ENCODE measurements at regions of chr2 and their contacts with region 1.

Region 1: DNA sequence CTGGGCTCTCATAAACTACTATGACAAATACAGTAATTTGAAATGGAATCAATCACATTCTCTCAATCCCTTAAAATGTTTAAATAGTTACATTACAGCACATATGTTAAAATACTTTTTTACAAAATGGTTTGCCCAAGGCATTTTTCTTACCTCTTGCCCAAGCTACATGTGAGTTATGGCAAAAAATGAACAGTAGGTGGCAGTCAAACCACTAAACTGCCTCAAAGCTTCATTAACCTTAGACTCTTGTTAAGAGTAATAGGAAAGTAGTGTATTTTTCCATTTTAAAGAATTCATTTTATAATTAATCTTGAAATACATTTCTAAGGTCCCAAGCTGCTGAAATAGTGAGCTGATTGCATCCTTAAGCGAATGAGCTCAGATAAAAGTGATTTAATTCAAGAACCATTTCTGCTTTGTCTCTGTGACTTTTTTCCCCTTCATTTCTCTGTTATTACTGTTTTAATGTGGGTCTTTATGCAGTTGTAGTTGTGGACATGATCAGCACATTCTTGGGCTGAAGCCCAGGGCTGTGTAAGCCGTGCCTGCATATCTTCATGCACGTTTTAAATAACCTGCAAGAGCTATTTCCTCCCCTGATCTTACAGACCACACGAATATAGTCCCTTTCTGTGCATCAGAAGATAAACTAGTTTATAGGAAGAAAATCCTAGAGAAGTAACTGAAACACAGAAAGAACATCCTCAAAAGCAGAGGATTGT is 311.8 kb downstream of the LNPK start:
- DNase-seq: peak; percentile 49
- H3K4me3 ChIP-seq: no peak overlapping the region
- H3K27ac ChIP-seq: no peak overlapping the region
- H3K27me3 ChIP-seq: peaks cover 3% of the 10 kb centered on the region
- CTCF ChIP-seq: peak; percentile 77

Region 2: GRCh38 chr2:174997110-174997509 is 693.2 kb before region 1 on chr2:
- CTCF ChIA-PET with region 1: no interaction called
- POLR2A ChIA-PET with region 1: no interaction called
- DNase-seq: no peak
- H3K4me3 ChIP-seq: no peak overlapping the region
- H3K27ac ChIP-seq: no peak overlapping the region
- H3K27me3 ChIP-seq: no peaks in the 10 kb centered on the region
- CTCF ChIP-seq: no peak

Region 3: DNA sequence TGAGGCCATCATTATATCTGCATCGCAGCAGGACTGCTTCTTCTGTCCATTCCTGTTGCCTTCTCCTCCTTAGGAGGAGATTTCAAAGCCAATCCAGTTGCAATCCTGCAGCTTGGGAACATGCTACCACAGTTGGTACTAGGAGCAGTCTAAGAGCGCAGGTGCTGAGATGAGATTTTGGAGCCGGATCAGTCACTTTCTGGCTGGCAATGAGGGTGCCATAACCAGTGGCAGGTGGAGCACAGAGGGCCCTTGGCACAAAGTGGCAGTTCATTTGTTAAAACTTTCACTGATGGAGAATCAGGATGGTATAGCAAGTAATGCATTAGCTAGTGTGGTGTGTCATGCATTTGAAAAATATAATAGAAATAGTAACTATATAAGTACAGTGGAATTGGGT is 335.0 kb before region 1 on chr2:
- CTCF ChIA-PET with region 1: no interaction called
- POLR2A ChIA-PET with region 1: no interaction called
- DNase-seq: no peak
- H3K4me3 ChIP-seq: no peak overlapping the region
- H3K27ac ChIP-seq: no peak overlapping the region
- H3K27me3 ChIP-seq: no peaks in the 10 kb centered on the region
- CTCF ChIP-seq: no peak

Region 4: DNA sequence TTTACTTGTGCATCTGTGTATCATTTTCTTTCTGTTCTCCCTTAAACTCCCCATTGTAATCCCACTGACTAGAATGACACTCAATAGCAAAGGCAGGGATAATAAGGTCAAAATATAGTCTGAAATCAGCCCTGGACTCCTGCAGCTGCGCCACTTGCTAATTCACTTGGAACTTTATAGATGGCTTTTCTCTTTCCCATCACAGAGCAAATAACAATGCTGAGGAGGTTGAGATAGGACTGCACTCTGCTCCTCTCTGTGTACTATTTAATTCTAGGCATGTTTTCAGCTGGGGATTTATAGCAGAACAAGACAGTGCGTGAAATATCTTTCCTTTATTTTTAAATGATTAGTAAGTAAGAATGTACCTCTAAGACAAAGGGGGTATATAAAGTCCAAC is 12.4 kb before region 1 on chr2:
- CTCF ChIA-PET with region 1: interaction called, 11 read pairs
- POLR2A ChIA-PET with region 1: no interaction called
- DNase-seq: no peak
- H3K4me3 ChIP-seq: no peak overlapping the region
- H3K27ac ChIP-seq: no peak overlapping the region
- H3K27me3 ChIP-seq: peaks cover 4% of the 10 kb centered on the region
- CTCF ChIP-seq: no peak

Region 5: GRCh38 chr2:175709248-175709647 is 19.0 kb after region 1 on chr2:
- CTCF ChIA-PET with region 1: no interaction called
- POLR2A ChIA-PET with region 1: no interaction called
- DNase-seq: no peak
- H3K4me3 ChIP-seq: no peak overlapping the region
- H3K27ac ChIP-seq: no peak overlapping the region
- H3K27me3 ChIP-seq: no peaks in the 10 kb centered on the region
- CTCF ChIP-seq: no peak

Region 6: GRCh38 chr2:176079831-176080539 is 389.7 kb after region 1 on chr2:
- CTCF ChIA-PET with region 1: interaction called, 28 read pairs
- POLR2A ChIA-PET with region 1: no interaction called
- DNase-seq: no peak
- H3K4me3 ChIP-seq: no peak overlapping the region
- H3K27ac ChIP-seq: no peak overlapping the region
- H3K27me3 ChIP-seq: peaks cover 89% of the 10 kb centered on the region
- CTCF ChIP-seq: peak; percentile 56

Region 7: GRCh38 chr2:176088048-176088936 is 398.0 kb after region 1 on chr2:
- CTCF ChIA-PET with region 1: interaction called, 135 read pairs
- POLR2A ChIA-PET with region 1: no interaction called
- DNase-seq: no peak
- H3K4me3 ChIP-seq: peak overlapping the region; percentile 45
- H3K27ac ChIP-seq: no peak overlapping the region
- H3K27me3 ChIP-seq: peaks cover 79% of the 10 kb centered on the region
- CTCF ChIP-seq: peak; percentile 76